Activated naive CD4-positive, alpha-beta T cell treated with anti-CD3 and anti-CD28 coated beads for 36 hours (primary cell): ENCODE measurements at regions of chr12 and their contacts with region 1.

Region 1: DNA sequence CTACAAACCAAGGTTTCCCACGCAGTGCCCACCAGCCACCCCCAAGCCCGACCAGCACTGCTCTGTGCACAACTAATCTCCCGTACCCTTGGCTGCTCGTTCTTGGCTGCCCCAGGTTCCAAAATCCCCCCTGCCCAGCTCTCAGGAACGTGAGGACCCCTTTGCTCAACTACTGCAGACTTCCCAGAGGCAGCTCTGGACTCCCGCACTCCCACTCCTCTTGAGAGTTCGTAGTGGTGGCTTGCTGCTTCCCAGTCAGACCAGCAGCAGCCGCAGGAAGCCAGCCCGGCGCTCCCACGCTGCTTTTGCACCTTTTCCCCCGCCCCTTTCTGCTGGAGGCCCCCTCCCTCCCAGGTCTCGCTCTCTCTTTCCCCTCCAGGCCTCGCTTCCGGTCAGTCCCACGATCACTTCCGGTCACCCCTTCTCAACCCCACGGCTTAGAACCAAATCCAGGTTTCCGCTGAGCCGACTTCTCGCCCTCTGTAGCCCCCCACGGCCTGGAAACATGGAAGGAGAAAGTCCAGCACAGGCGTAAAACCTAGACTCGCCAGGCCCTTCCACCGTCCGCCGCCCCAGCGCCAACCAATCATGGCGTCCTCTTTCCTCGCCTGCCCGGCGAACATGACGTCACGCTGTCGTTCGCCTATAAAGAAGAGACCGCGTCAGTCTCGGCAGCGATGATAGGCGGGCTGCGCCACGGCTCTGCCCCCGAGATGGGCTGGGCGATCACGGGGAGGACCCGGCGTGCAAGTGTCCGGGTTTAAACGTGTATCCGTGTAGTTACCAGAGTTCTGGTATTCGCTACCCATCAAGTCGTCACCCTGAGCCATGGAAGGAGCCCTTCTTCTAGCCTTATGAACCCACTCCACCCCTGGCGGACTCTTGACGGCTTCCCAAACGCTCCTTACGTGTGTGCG is at the start of gene TFCP2:
- DNase-seq: peak; percentile 96
- H3K4me3 Mint-ChIP-seq: peak within 1 kb of the TSS; percentile 66
- H3K27ac Mint-ChIP-seq: peak within 1 kb of the TSS; percentile 66
- H3K4me1 Mint-ChIP-seq: peaks cover 14% of the 10 kb centered on the region
- H3K27me3 Mint-ChIP-seq: no peaks in the 10 kb centered on the region
- total RNA-seq, gene TFCP2: 23.6 to 25.4 TPM

Region 2: DNA sequence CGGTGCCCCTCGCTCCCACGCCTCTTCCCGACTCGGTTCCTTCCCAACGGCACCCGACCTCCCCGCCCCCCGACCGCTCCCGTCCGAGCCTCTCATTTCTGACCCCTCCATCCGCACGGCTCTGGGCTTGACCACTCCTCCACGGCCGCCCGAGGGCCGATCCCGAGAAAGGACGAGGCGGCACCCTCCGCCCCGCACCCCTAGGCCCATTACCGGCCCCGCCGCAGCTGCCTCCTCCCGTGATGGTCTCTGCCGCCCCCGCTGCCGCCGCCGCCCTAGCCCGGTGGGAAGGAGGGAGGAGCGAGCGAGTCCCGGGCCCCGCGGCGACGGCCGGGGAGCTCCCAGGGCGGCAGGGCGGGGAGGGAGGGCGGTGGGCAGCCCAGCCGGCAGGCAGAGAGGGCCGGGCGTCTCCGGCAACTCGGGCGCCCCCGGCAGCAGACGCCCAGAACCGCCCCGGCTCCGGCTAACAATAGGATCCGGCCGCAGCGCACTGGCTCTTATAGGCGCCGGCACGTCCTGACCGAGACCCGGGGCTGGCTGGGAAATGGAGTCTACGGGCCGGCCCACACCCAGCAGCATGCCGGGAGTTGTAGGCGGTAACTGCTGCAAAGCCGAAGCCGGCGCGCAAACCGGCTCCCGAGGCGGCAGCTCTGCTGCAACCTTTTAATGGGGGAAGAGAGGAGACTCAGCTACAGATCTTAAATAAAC is 89.5 kb before region 1 on chr12 and contains the start of gene CSRNP2:
- CTCF ChIA-PET with region 1: no interaction called
- intact Hi-C with region 1: loop called (anchors 1 kb)
- DNase-seq: peak; percentile 96
- H3K4me3 Mint-ChIP-seq: peak within 1 kb of the TSS; percentile 94
- H3K27ac Mint-ChIP-seq: peak within 1 kb of the TSS; percentile 70
- H3K4me1 Mint-ChIP-seq: peaks cover 35% of the 10 kb centered on the region
- H3K27me3 Mint-ChIP-seq: no peaks in the 10 kb centered on the region
- total RNA-seq, gene CSRNP2: 8.4 to 11.0 TPM

Region 3: DNA sequence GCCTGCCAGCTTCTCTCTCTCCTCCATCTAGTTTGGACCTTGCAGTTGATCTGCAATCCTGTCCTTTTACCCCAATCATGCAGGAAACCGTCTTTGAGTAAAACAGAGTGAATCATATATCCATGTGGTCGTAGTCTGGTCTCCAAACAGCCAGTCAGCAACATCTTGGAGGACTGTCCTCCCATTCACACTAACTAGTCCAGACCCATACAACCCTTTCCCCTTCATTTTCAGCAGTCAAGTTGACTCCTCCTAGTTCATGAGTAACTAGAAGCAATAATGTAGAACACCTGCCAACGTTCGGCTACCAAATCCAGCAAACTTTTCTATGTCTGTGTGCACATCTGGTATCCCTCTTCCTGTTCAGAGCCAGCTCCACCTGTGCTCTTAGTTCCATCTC is 162.0 kb after region 1 on chr12:
- CTCF ChIA-PET with region 1: no interaction called
- intact Hi-C with region 1: no loop called
- DNase-seq: no peak
- H3K4me3 Mint-ChIP-seq: no peak overlapping the region
- H3K27ac Mint-ChIP-seq: no peak overlapping the region
- H3K4me1 Mint-ChIP-seq: peaks cover 14% of the 10 kb centered on the region
- H3K27me3 Mint-ChIP-seq: no peaks in the 10 kb centered on the region